Activated CD4-positive, alpha-beta memory T cell treated with anti-CD3 and anti-CD28 coated beads for 36 hours (primary cell): ENCODE measurements at regions of chr7 and their contacts with region 1.

Region 1: GRCh38 chr7:140924019-140924820 is 509 bp downstream of the BRAF start:
- DNase-seq: peak; percentile 81
- H3K4me3 Mint-ChIP-seq: no peak overlapping the region
- H3K27ac Mint-ChIP-seq: no peak overlapping the region
- H3K4me1 Mint-ChIP-seq: peaks cover 16% of the 10 kb centered on the region
- H3K27me3 Mint-ChIP-seq: no peaks in the 10 kb centered on the region

Region 2: DNA sequence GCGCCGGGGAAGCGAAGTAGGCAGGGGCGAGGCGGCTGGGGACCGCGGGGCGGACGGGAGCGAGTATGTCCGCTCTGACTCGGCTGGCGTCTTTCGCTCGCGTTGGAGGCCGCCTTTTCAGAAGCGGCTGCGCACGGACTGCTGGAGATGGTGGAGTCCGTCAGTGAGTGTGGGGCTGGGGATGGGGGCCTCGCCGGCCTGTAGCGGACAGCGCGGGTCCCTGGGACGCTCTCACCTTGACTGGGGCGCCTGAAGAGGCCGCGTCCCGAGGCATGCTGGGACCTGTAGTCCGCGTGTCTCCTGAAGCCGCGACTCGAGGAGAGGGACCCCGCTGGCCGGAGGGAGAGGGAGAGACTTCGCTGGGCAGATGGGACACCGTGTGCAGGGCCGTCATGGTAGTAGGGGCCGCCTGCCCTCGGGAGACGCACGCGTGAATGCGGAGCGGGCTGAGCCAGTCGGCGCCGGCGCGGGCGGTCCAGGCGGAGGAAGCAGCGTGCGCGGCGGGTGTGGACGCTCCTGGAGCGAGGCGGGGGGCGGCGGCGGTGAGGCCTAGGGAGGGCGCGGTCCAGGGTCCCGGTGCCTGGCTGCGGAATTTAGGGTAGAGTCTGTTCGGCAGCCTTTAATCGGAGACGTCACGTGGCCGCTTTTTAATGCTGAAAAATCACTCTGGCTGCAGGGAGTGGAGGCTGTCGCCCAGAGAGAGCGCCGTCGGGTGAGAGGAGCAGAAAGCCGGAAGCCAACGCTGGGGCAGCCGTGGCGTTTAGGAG is 227.4 kb before region 1 on chr7 and contains the start of gene NDUFB2:
- CTCF ChIA-PET with region 1: no interaction called
- POLR2A ChIA-PET with region 1: no interaction called
- intact Hi-C with region 1: loop called (anchors 1 kb)
- DNase-seq: peak; percentile 80
- H3K4me3 Mint-ChIP-seq: peak within 1 kb of the TSS; percentile 95
- H3K27ac Mint-ChIP-seq: peak within 1 kb of the TSS; percentile 97
- H3K4me1 Mint-ChIP-seq: peaks cover 32% of the 10 kb centered on the region
- H3K27me3 Mint-ChIP-seq: no peaks in the 10 kb centered on the region
- total RNA-seq, gene NDUFB2: 171 to 183 TPM

Region 3: DNA sequence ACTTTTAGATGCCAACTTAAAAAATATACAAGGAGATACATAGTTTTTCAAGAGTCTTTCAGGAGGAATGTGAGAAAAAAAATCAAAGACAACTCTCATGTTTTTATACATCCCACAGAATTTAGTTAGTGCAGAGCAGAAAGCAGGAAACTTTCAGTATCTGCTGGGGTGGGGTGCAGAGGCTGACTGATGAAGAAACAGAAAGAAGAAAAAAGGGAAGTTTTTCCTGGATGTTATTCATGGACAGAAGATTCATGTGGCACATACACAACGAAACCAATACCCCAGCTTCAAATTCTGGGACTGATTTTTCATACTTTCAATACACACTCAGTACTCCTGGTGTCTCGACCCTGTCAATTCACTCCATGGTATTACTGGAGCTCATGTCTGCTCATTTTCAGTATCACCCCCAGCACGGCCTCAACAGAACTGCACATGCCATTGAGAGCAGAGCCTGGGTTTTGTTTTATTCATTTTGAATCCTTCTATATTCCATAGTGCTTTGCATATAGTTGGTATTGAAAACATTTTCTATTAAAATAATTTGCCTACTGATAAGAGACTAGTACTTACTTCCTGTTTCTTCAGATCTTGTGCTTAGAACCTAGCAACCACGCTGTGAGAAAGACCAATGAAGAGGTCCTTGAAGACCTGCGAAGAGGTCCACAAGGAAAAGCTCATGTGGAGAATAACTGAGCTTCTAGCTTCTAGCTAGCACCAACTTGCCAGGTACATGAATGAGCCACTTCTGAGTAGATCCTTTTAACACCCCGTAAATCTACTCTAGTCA is 178.8 kb before region 1 on chr7:
- CTCF ChIA-PET with region 1: no interaction called
- POLR2A ChIA-PET with region 1: no interaction called
- intact Hi-C with region 1: no loop called
- DNase-seq: no peak
- H3K4me3 Mint-ChIP-seq: no peak overlapping the region
- H3K27ac Mint-ChIP-seq: no peak overlapping the region
- H3K4me1 Mint-ChIP-seq: no peaks in the 10 kb centered on the region
- H3K27me3 Mint-ChIP-seq: no peaks in the 10 kb centered on the region

Region 4: GRCh38 chr7:140810830-140811556 is 113.2 kb before region 1 on chr7:
- CTCF ChIA-PET with region 1: interaction called, 22 read pairs
- POLR2A ChIA-PET with region 1: no interaction called
- intact Hi-C with region 1: loop called (anchors 1 kb)
- DNase-seq: peak; percentile 58
- H3K4me3 Mint-ChIP-seq: no peak overlapping the region
- H3K27ac Mint-ChIP-seq: no peak overlapping the region
- H3K4me1 Mint-ChIP-seq: no peaks in the 10 kb centered on the region
- H3K27me3 Mint-ChIP-seq: no peaks in the 10 kb centered on the region

Region 5: GRCh38 chr7:140876519-140877248 is 47.5 kb before region 1 on chr7:
- CTCF ChIA-PET with region 1: no interaction called
- POLR2A ChIA-PET with region 1: no interaction called
- intact Hi-C with region 1: loop called (anchors 2 kb)
- DNase-seq: no peak
- H3K4me3 Mint-ChIP-seq: no peak overlapping the region
- H3K27ac Mint-ChIP-seq: no peak overlapping the region
- H3K4me1 Mint-ChIP-seq: peaks cover 44% of the 10 kb centered on the region
- H3K27me3 Mint-ChIP-seq: no peaks in the 10 kb centered on the region

Region 6: DNA sequence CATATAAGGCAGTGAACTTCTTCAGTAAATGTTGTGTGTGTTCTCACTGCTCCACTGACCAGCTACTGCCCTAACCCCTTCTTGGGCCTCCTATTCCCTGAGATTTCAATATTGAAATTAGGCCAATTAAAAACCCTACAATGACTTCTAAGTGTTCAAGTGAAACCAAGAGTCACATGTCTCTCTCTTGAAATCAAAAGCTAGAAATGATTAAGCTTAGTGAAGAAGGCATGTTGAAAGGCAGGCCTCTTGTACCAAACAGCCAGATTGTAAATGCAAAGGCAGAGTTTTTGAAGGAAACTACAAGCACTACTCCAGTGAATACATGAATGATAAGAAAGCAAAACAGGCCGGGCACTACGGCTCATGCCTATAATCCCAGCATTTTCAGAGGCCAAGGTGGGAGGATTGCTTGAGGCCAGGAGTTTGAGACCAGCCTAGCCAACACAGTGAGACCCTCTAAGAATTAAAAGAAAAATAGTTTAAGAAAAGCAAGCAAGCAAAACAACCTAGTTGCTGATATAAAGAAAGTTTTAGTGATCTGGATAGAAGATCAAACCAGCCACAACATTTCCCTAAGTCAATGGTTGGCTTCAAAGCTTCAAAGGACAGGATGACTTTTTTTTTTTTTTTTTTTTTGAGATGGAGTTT is 21.8 kb before region 1 on chr7:
- CTCF ChIA-PET with region 1: no interaction called
- POLR2A ChIA-PET with region 1: interaction called, 5 read pairs
- intact Hi-C with region 1: loop called (anchors 1 kb)
- DNase-seq: no peak
- H3K4me3 Mint-ChIP-seq: peak overlapping the region; percentile 41
- H3K27ac Mint-ChIP-seq: peak overlapping the region; percentile 85
- H3K4me1 Mint-ChIP-seq: peaks cover 54% of the 10 kb centered on the region
- H3K27me3 Mint-ChIP-seq: no peaks in the 10 kb centered on the region

Region 7: GRCh38 chr7:140998715-140999114 is 74.5 kb after region 1 on chr7:
- CTCF ChIA-PET with region 1: no interaction called
- POLR2A ChIA-PET with region 1: no interaction called
- intact Hi-C with region 1: no loop called
- DNase-seq: no peak
- H3K4me3 Mint-ChIP-seq: no peak overlapping the region
- H3K27ac Mint-ChIP-seq: no peak overlapping the region
- H3K4me1 Mint-ChIP-seq: no peaks in the 10 kb centered on the region
- H3K27me3 Mint-ChIP-seq: no peaks in the 10 kb centered on the region

Region 8: GRCh38 chr7:141551094-141551781 is 627.0 kb after region 1 on chr7 and contains the start of gene AGK:
- CTCF ChIA-PET with region 1: no interaction called
- POLR2A ChIA-PET with region 1: no interaction called
- intact Hi-C with region 1: loop called (anchors 10 kb)
- DNase-seq: peak; percentile 87
- H3K4me3 Mint-ChIP-seq: peak within 1 kb of the TSS; percentile 91
- H3K27ac Mint-ChIP-seq: peak within 1 kb of the TSS; percentile 87
- H3K4me1 Mint-ChIP-seq: peaks cover 31% of the 10 kb centered on the region
- H3K27me3 Mint-ChIP-seq: no peaks in the 10 kb centered on the region
- total RNA-seq, gene AGK: 50.2 to 57.2 TPM